ENCODE measurements at regions of chr7 and their contacts with region 1.

Region 1: DNA sequence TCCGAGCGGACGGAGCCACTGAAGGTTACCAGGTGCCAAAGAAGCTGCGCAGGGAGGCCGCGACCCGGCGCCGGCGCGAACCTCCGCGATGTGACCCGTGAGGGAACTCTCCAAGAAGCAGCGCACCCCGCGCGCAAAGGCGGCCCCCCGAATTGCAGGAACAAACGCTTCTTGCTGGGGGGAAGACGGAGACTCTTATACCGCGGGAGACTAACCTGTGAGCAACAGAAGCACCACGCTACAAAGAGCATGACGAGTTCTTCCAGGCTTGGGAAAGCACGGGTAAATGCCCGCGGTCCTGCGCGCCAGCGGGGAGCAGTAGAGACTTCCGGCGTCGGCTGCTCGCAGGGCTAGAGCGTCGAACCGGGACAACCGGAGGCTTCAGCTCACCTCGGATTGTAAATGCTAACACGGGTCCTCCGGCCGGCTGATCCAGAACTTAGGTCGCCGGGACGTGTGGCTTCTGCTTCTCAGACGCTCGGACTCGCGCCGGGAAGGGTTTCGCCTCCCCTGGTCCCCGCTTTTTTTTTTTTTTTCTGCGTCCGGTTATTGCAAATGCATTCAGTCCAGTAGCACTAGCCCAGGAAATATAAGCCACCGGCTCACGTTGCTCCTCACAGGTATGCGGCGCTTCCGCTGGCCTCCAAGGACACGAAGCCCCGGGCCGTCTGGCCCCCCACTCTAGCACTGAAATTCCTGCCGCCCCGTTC is at the start of gene COA1:
- DNase-seq: peak; percentile 68 to 94 (median 74)
- ATAC-seq: peak; percentile 93
- H3K4me3 ChIP-seq: peak within 1 kb of the TSS; percentile 98
- H3K4me3 Mint-ChIP-seq: peak within 1 kb of the TSS; percentile 96
- H3K27ac ChIP-seq: peak within 1 kb of the TSS; percentile 75
- H3K27ac Mint-ChIP-seq: peak within 1 kb of the TSS; percentile 91
- H3K4me1 ChIP-seq: peaks cover 24% of the 10 kb centered on the region
- H3K4me1 Mint-ChIP-seq: peaks cover 55% of the 10 kb centered on the region
- H3K27me3 ChIP-seq: no peaks in the 10 kb centered on the region
- H3K27me3 Mint-ChIP-seq: no peaks in the 10 kb centered on the region
- CTCF ChIP-seq: no peak
- total RNA-seq, gene COA1: 78.9 to 80.7 TPM

Region 2: DNA sequence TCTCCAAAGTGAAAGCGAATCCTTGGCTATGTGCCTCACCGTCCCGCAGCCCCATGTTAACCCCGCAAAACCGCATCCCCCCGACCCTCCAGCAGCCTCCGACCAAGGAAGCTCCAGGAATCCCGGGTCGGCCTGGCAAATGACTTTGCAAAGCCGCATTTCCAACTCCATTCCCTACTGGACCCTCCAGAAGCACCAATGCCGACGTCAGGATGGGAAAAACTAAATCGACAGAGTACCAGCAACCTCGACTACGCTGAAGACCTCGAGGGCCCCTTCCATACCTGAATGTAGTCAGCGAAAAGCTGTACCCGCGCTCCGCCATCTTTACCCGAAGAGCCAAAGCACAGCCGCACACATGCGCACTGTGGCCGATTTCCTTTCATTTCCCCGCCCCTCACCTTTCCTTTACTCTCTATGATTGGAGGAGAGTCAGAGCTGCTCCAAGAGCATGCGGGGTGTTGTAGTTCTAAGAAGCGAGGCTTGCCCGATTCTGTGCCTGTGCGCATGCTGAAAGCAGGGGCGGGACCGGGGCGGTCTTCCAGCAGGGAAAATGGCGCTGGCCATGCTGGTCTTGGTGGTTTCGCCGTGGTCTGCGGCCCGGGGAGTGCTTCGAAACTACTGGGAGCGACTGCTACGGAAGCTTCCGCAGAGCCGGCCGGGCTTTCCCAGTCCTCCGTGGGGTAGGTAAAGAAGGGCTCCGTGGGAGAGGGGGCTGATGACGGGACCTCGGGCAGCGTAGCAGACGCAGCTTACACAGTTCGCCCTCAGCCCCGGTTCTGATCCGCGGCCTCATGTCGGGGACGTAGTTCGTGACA is 797.3 kb before region 1 on chr7 and contains the starts of genes MRPL32 and PSMA2:
- CTCF ChIA-PET with region 1: no interaction called
- POLR2A ChIA-PET with region 1: interaction called, 10 read pairs
- intact Hi-C with region 1: no loop called
- DNase-seq: peak; percentile 88 to 98 (median 91)
- ATAC-seq: peak; percentile 98
- H3K4me3 ChIP-seq: peak within 1 kb of the TSS; percentile 87
- H3K4me3 Mint-ChIP-seq: peak within 1 kb of the TSS; percentile 92
- H3K27ac ChIP-seq: peak within 1 kb of the TSS; percentile 74 to 87
- H3K27ac Mint-ChIP-seq: peak within 1 kb of the TSS; percentile 92
- H3K4me1 ChIP-seq: peaks cover 28% of the 10 kb centered on the region
- H3K4me1 Mint-ChIP-seq: peaks cover 79% of the 10 kb centered on the region
- H3K27me3 ChIP-seq: no peaks in the 10 kb centered on the region
- H3K27me3 Mint-ChIP-seq: no peaks in the 10 kb centered on the region
- CTCF ChIP-seq: no peak
- total RNA-seq, gene MRPL32: 57.1 to 60.7 TPM
- total RNA-seq, gene PSMA2: 38.8 to 41.0 TPM

Region 3: GRCh38 chr7:43758029-43758821 is 28.9 kb after region 1 on chr7 and contains the start of gene BLVRA:
- CTCF ChIA-PET with region 1: no interaction called
- POLR2A ChIA-PET with region 1: interaction called, 17 read pairs
- intact Hi-C with region 1: loop called (anchors 2 to 5 kb)
- DNase-seq: peak; percentile 30 to 83 (median 58)
- ATAC-seq: peak; percentile 79
- H3K4me3 ChIP-seq: peak within 1 kb of the TSS; percentile 68
- H3K4me3 Mint-ChIP-seq: peak within 1 kb of the TSS; percentile 96
- H3K27ac ChIP-seq: peak within 1 kb of the TSS in 1 of 2 donors; percentile 35
- H3K27ac Mint-ChIP-seq: peak within 1 kb of the TSS; percentile 64
- H3K4me1 ChIP-seq: peaks cover 15% of the 10 kb centered on the region
- H3K4me1 Mint-ChIP-seq: peaks cover 34% of the 10 kb centered on the region
- H3K27me3 ChIP-seq: no peaks in the 10 kb centered on the region
- H3K27me3 Mint-ChIP-seq: no peaks in the 10 kb centered on the region
- CTCF ChIP-seq: no peak
- total RNA-seq, gene BLVRA: 15.7 TPM

Region 4: DNA sequence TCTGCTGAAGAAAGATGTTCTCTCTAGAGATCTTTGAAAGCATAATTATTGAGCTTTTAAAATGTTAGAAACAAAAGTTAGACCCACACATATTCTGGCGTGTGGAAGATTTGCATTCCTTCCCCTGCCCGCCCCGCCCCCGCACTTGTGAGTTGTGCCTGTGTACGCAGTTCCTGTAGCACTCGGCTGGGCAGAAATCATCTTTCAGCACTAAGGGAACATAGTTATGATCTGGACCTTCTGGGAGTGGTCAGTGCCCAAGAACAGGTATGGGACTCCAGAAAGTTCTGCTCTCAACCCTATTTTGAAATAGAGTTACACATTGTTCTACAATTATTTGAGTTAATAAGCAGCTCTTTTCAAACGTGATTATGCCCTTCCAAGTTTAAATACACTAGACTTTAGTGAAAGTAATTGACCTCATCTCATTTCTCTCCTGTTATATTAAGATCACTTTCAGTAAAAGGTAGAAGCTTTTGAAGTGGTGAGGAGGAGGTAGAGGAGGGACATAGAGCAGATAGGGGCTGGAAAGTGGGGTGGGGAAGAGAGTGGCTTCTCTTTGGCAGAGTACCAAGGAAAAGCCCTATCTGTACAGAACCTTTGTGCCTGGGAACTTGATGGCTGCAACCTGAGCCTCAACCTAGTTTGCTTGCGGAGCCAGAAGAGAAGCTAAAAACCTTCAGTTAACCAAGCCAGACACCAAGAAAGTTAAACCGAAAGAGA is 34.8 kb after region 1 on chr7:
- CTCF ChIA-PET with region 1: interaction called, 4 read pairs
- POLR2A ChIA-PET with region 1: interaction called, 4 read pairs
- intact Hi-C with region 1: loop called in 1 of 2 experiments (anchors 5 kb)
- DNase-seq: peak in 9 of 14 experiments; percentile 13 to 53 (median 30)
- ATAC-seq: peak; percentile 45
- H3K4me3 ChIP-seq: peak overlapping the region; percentile 1
- H3K4me3 Mint-ChIP-seq: peak overlapping the region; percentile 64
- H3K27ac ChIP-seq: no peak overlapping the region
- H3K27ac Mint-ChIP-seq: peak overlapping the region; percentile 62
- H3K4me1 ChIP-seq: peaks cover 17% of the 10 kb centered on the region
- H3K4me1 Mint-ChIP-seq: peaks cover 42% of the 10 kb centered on the region
- H3K27me3 ChIP-seq: no peaks in the 10 kb centered on the region
- H3K27me3 Mint-ChIP-seq: no peaks in the 10 kb centered on the region
- CTCF ChIP-seq: no peak

Region 5: DNA sequence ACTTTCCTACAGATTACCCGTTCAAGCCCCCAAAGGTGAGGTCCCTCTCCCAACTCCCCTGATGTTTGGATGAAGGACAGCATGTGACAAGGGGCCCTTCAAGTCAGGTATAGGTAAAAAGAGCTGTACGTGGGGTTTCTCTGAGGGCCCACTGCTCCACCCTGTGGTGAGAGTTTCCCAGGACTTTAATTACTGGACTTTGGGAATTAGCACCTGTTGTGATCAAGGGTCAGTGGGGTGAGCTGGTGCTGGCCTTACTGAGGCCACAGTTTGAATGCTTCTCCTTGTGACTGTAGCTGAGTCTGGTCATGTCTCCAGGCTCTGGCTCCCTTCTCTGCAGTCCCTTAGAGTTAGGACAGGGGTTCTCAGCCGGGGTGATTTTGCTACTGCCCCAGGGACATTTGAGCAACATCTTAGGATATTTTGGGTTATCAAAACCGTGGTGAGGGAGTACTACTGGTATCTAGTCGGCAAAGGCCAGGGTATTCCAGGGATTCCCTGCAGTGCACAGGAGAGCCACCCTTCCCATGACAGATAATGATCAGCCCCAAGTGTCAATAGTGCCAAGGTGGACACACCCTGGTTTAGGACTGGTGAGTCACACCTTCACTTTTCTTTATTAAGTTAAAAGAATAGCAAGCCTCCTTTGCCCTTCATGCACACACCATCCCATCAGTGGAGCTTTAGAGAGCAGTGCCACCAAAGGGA is 213.8 kb after region 1 on chr7:
- CTCF ChIA-PET with region 1: no interaction called
- POLR2A ChIA-PET with region 1: no interaction called
- intact Hi-C with region 1: no loop called
- DNase-seq: no peak
- ATAC-seq: no peak
- H3K4me3 ChIP-seq: no peak overlapping the region
- H3K4me3 Mint-ChIP-seq: no peak overlapping the region
- H3K27ac ChIP-seq: no peak overlapping the region
- H3K27ac Mint-ChIP-seq: no peak overlapping the region
- H3K4me1 ChIP-seq: no peaks in the 10 kb centered on the region
- H3K4me1 Mint-ChIP-seq: no peaks in the 10 kb centered on the region
- H3K27me3 ChIP-seq: no peaks in the 10 kb centered on the region
- H3K27me3 Mint-ChIP-seq: no peaks in the 10 kb centered on the region
- CTCF ChIP-seq: no peak

Measured in CD4-positive, alpha-beta T cell (primary cell).